ENCODE measurements at regions of chrX and their contacts with region 1.

Region 1: GRCh38 chrX:85111347-85111746 is 107.7 kb downstream of the APOOL start:
- DNase-seq: peak in 12 of 42 donors; percentile 1 to 44 (median 18)

Region 2: GRCh38 chrX:84933935-84934556 is 177.3 kb before region 1 on chrX:
- intact Hi-C with region 1: no loop called
- DNase-seq: no peak

Region 3: GRCh38 chrX:85544609-85545008 is 433.3 kb after region 1 on chrX:
- intact Hi-C with region 1: loop called (anchors 5 kb)
- DNase-seq: no peak

Measured in head of caudate nucleus (tissue), 42 donors.